A549 (cell line): ENCODE measurements at regions of chr11 and their contacts with region 1.

Region 1: DNA sequence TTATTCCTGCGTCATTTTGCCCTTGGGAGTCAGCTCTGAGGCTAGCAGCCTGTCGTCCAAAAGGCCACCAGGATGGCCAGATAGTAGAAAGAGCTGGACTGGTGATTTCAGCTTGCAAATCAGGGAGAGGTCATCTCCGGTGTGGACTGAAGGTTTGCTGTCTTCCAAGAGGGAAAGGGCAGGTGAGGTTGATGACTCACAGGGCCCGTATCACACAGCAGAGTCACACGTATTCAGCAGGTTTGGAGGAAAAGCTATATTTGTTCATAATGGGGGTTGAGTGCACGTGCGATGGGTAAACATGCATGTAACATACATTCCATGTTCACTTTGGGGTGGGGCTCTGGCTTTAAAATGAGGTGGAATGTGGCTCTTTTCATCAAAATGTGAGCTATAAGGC is 25.6 kb downstream of the MRPL21 start:
- DNase-seq: no peak
- ATAC-seq: no peak
- H3K4me3 ChIP-seq: no peak overlapping the region
- H3K27ac ChIP-seq: no peak overlapping the region
- H3K4me1 ChIP-seq: no peaks in the 10 kb centered on the region
- CTCF ChIP-seq: no peak
- EP300 ChIP-seq: no peak
- POLR2A ChIP-seq: no peak
- RAD21 ChIP-seq: no peak

Region 2: DNA sequence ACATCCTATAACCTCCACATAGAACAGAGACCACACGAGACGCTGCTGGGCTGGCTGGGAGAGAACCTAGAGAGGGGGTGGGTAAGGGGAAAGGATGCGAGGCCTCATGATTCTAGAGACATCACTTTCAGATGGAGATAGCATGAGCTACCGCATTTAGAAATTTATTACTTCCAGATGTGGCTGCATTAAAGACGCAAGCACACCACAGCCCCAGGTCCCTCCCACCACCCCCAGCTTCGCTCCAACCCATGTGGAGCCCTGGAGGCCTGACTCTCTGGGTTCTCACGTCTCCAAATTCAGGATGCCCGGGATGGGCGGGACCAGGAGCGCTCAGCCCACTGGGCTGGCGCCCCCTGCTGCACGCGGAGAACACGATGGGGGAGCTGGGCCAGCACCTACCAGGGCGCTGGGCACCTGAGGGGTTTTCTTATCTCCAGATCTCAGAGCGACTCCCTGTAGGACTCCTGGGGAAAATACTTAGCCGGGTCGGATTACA is 12.0 kb after region 1 on chr11:
- CTCF ChIA-PET with region 1: interaction called, 19 read pairs
- POLR2A ChIA-PET with region 1: no interaction called
- DNase-seq: peak; percentile 42 to 52
- ATAC-seq: peak; percentile 82 to 93; a peak in 5 of 6 replicates
- H3K4me3 ChIP-seq: no peak overlapping the region
- H3K27ac ChIP-seq: no peak overlapping the region
- H3K4me1 ChIP-seq: no peaks in the 10 kb centered on the region
- CTCF ChIP-seq: peak; percentile 47
- EP300 ChIP-seq: no peak
- POLR2A ChIP-seq: no peak
- RAD21 ChIP-seq: peak; percentile 46 to 47; a peak in 4 of 5 replicates

Region 3: GRCh38 chr11:68903288-68904247 is 25.5 kb after region 1 on chr11 and contains the starts of genes IGHMBP2 and MRPL21:
- CTCF ChIA-PET with region 1: no interaction called
- POLR2A ChIA-PET with region 1: no interaction called
- DNase-seq: peak; percentile 84 to 90
- ATAC-seq: peak; percentile 98
- H3K4me3 ChIP-seq: peak within 1 kb of the TSS; percentile 96
- H3K27ac ChIP-seq: peak within 1 kb of the TSS; percentile 92 to 94
- H3K4me1 ChIP-seq: peaks cover 18% of the 10 kb centered on the region
- CTCF ChIP-seq: no peak
- EP300 ChIP-seq: no peak
- POLR2A ChIP-seq: peak; percentile 95
- RAD21 ChIP-seq: peak; percentile 10 to 37; a peak in 2 of 5 replicates
- polyA plus RNA-seq, gene IGHMBP2: 11.9 and 15.7 TPM in 2 replicates
- polyA plus RNA-seq, gene MRPL21: 110 and 131 TPM in 2 replicates

Region 4: GRCh38 chr11:69642913-69643632 is 765.1 kb after region 1 on chr11:
- CTCF ChIA-PET with region 1: no interaction called
- POLR2A ChIA-PET with region 1: no interaction called
- DNase-seq: peak; percentile 55 to 80
- ATAC-seq: peak; percentile 13 to 41; a peak in 4 of 6 replicates
- H3K4me3 ChIP-seq: peak overlapping the region; percentile 91
- H3K27ac ChIP-seq: peak overlapping the region; percentile 95 to 96
- H3K4me1 ChIP-seq: peaks cover 45% of the 10 kb centered on the region
- CTCF ChIP-seq: peak; percentile 90
- EP300 ChIP-seq: no peak
- POLR2A ChIP-seq: no peak
- RAD21 ChIP-seq: peak; percentile 74 to 97